Prostate gland (tissue), 2 donors: ENCODE measurements at regions of chr18 and their contacts with region 1.

Region 1: GRCh38 chr18:28013066-28013465 is 163.9 kb downstream of the CDH2 start:
- DNase-seq: no peak
- H3K4me3 ChIP-seq: no peak overlapping the region
- H3K27ac ChIP-seq: no peak overlapping the region
- H3K4me1 ChIP-seq: no peaks in the 10 kb centered on the region
- H3K27me3 ChIP-seq: no peaks in the 10 kb centered on the region
- CTCF ChIP-seq: no peak
- POLR2A ChIP-seq: no peak

Region 2: GRCh38 chr18:27695503-27695902 is 317.6 kb before region 1 on chr18:
- intact Hi-C with region 1: no loop called
- DNase-seq: no peak
- H3K4me3 ChIP-seq: no peak overlapping the region
- H3K27ac ChIP-seq: no peak overlapping the region
- H3K4me1 ChIP-seq: no peaks in the 10 kb centered on the region
- H3K27me3 ChIP-seq: no peaks in the 10 kb centered on the region
- CTCF ChIP-seq: no peak
- POLR2A ChIP-seq: no peak

Region 3: DNA sequence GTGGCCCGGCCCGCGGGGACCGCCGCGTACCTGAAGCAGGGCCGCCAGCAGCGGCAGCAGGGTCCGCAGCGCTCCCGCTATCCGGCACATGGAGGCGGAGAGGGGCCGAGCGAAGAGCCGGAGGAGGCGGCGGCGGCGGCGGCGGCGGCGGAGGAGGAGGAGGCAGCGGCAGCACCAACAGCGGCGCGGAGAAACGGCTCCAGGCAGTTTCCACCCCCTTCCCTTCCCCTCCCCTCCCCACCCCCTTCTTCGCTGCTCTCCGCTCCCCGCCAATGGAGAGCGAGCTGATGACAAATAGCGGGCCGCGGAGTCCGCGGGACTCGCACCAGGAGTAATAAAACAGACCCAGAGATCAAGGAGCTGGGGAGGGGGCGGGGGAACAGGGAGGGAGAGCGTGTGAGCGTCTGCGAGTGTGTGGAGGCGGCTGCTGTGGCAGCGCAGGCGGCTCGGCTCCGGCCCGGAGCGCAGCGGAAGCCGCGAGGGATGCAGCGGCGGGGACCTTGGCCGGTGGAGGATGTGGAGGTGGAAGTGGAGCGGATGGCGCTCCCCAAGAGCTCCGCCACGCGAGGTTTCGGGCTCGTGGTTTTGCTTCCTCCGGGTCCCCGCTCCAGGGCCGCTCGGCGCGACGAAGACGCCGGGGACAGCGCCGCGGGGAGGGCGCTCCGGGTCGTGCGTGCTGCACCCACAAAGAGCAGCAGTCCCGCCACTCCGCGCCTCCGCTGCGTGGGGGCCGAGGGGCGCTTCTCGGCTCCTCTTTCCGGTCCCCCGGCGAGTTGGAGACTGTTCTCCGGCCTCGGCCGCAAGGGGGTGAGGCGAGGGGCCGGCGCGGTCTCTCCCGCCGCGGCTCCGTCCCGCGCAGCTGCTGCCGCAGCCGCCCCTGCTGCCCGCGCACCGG is 164.1 kb after region 1 on chr18 and contains the start of gene CDH2:
- intact Hi-C with region 1: loop called (anchors 10 kb)
- DNase-seq: no peak
- H3K4me3 ChIP-seq: peak within 1 kb of the TSS; percentile 34 to 40
- H3K27ac ChIP-seq: no peak within 1 kb of the TSS
- H3K4me1 ChIP-seq: no peaks in the 10 kb centered on the region
- H3K27me3 ChIP-seq: peaks cover 18% of the 10 kb centered on the region
- CTCF ChIP-seq: no peak
- POLR2A ChIP-seq: no peak
- total RNA-seq, gene CDH2: 0.41 to 125 TPM